ENCODE measurements at regions of chr18 and their contacts with region 1.

Region 1: GRCh38 chr18:2958819-2959298 is 54.1 kb downstream of the LPIN2 start:
- DNase-seq: peak; percentile 83
- ATAC-seq: peak; percentile 40
- H3K4me3 Mint-ChIP-seq: peak overlapping the region; percentile 50
- H3K27ac Mint-ChIP-seq: peak overlapping the region; percentile 100
- H3K4me1 Mint-ChIP-seq: peaks cover 88% of the 10 kb centered on the region
- H3K27me3 Mint-ChIP-seq: no peaks in the 10 kb centered on the region

Region 2: GRCh38 chr18:2971741-2972552 is 13.1 kb after region 1 on chr18:
- CTCF ChIA-PET with region 1: interaction called, 67 read pairs
- DNase-seq: peak; percentile 91
- ATAC-seq: peak; percentile 77
- H3K4me3 Mint-ChIP-seq: peak overlapping the region; percentile 77
- H3K27ac Mint-ChIP-seq: peak overlapping the region; percentile 98
- H3K4me1 Mint-ChIP-seq: peaks cover 92% of the 10 kb centered on the region
- H3K27me3 Mint-ChIP-seq: no peaks in the 10 kb centered on the region

Region 3: DNA sequence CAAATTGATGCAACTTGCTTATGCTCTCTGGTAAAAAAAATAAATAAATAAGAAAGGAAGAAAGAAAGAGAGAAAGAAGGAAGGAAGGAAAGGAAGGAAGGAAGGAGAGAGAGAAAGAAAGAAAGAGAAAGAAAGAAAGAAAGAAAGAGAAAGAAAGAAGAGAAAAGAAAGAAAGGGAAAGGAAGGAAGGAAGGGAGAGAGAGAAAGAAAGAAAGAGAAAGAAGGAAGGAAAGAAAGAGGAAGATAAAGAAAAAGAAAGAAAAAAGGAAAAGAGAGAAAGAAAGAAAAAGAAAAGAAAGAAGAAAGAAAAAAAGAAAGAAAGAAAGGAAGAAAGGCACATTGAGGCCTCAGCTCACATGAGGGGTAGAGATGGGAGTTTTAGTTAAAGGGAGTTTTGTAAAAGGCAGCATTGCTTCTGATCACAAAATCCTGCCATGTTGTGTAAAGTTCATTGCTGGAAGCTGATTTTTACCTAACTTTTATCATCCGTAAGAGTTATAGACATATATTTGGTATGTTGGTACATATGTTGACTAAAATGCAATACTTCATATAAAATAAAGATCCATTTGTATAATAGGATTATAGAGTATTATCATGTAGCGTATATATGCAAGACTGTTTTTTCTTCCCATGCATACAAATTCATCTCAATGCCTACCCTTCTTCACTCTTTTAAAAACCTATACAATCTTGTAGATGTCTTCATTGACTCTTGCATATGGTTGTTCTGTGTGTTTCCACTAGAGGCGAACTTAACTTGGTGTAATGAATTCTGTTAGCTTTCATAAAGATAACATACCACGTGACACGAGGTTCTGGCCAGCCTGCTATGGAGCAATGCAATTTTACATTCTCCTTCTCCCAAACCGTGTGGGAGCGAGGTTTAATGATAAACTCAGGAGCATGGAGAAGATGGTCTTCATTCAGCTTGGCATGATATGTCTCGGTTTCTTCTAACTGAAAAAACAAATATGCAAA is 228.1 kb after region 1 on chr18:
- CTCF ChIA-PET with region 1: no interaction called
- DNase-seq: no peak
- ATAC-seq: no peak
- H3K4me3 Mint-ChIP-seq: no peak overlapping the region
- H3K27ac Mint-ChIP-seq: no peak overlapping the region
- H3K4me1 Mint-ChIP-seq: peaks cover 2% of the 10 kb centered on the region
- H3K27me3 Mint-ChIP-seq: no peaks in the 10 kb centered on the region

Region 4: GRCh38 chr18:3261371-3262246 is 302.8 kb after region 1 on chr18 and contains the start of gene MYL12B:
- CTCF ChIA-PET with region 1: no interaction called
- DNase-seq: peak; percentile 90
- ATAC-seq: peak; percentile 80
- H3K4me3 Mint-ChIP-seq: peak within 1 kb of the TSS; percentile 94
- H3K27ac Mint-ChIP-seq: peak within 1 kb of the TSS; percentile 100
- H3K4me1 Mint-ChIP-seq: peaks cover 63% of the 10 kb centered on the region
- H3K27me3 Mint-ChIP-seq: no peaks in the 10 kb centered on the region
- total RNA-seq, gene MYL12B: 313 to 322 TPM

Measured in activated CD8-positive, alpha-beta memory T cell treated with anti-CD3 and anti-CD28 coated beads, Interleukin-2, amount 10 ng/mL, durations not matched to agents 7 days and 5 days (primary cell).